WTC11 (cell line): ENCODE measurements at regions of chr16 and their contacts with region 1.

Region 1: DNA sequence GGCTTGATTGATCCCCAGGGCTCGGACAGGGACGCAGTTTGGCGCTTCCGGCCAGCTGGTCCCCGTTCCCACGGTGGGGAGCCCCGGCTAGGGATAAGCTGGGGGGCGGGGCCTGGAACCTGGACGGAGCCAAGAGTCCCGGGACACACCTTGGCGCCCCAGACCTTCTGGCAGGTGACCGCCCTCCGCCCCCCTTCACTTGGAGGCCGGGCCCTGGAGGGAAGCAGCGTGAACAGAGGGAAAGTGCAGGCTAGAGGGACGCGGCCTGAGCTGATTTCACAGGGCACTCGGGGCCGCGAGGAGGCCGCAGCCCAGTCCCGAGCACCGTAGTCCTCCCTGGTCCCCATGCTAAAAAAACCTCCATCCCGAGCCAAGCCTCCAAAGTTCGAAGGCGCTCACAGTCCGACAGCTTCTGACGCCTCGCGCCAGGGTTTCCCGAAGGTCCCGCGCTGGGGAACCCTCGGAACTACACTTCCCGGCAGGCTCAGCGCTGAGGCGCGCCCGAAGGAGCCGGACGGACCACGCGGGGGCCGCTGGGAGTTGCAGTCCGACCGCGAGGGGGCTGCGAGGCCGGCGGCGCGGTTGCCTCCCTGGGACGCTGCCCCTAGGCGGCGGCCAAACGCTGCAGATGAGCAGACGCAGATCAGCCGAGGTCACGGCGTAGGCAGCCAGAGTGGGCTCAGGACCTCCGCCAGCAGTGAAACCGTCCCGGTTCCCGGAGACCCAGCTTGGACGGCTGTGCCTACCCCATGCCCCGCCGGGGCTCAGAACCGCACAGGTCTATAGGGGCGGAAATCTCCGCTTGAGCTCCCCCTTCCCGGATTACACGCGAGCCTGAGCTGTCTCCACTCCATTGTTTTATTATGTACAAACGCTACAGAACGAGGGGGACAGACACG is at the start of gene TBX6:
- DNase-seq: peak; percentile 97
- ATAC-seq: peak; percentile 69
- H3K4me3 Mint-ChIP-seq: peak within 1 kb of the TSS; percentile 87
- H3K27ac Mint-ChIP-seq: peak within 1 kb of the TSS; percentile 98
- H3K4me1 Mint-ChIP-seq: peaks cover 27% of the 10 kb centered on the region
- H3K27me3 Mint-ChIP-seq: peaks cover 3% of the 10 kb centered on the region
- CTCF ChIP-seq: no peak
- total RNA-seq, gene TBX6: 5.1 to 7.6 TPM (median 6.6 TPM) in 3 replicates

Region 2: DNA sequence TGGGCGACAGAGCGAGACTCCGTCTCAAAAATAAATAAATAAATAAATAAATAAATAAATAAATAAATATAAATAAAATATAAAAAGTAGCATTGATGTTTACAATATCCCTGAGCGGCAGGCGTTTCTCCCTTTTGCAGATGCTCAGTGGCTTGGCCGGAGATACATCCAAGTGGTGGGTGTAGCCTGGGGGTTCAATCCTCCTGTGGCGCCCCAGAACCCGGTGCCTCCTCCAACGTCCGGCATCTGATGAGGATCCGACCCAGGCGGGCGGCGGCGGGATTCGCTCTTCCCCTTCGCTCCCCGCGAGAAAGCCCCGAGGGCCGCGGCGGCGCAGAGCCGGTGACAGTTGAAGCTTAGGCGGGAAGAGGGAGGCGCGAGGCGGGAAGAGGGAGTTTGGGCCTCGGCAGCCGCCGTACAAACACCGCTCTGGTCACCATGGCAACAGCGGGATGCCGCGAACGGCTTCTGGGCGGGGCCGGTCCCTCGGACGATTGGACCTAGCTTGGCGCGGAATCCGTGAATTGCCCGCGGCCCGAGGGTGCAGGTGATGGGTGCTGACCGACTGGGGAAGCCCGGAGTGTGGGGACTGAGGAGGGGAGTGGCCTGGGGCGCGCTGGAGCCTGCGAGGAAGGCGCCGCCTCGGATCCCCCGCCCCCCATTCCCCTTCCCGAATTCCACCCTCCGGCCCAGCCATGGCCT is 38.9 kb before region 1 on chr16:
- CTCF ChIA-PET with region 1: interaction called, 26 read pairs
- POLR2A ChIA-PET with region 1: no interaction called
- DNase-seq: peak; percentile 94
- ATAC-seq: peak; percentile 60
- H3K4me3 Mint-ChIP-seq: peak overlapping the region; percentile 82
- H3K27ac Mint-ChIP-seq: no peak overlapping the region
- H3K4me1 Mint-ChIP-seq: peaks cover 14% of the 10 kb centered on the region
- H3K27me3 Mint-ChIP-seq: peaks cover 37% of the 10 kb centered on the region
- CTCF ChIP-seq: no peak

Region 3: GRCh38 chr16:30075507-30076275 is 16.0 kb before region 1 on chr16 and contains the start of gene PPP4C:
- CTCF ChIA-PET with region 1: interaction called, 45 read pairs
- POLR2A ChIA-PET with region 1: interaction called, 7 read pairs
- DNase-seq: peak; percentile 90
- ATAC-seq: peak; percentile 84
- H3K4me3 Mint-ChIP-seq: peak within 1 kb of the TSS; percentile 89
- H3K27ac Mint-ChIP-seq: peak within 1 kb of the TSS; percentile 97
- H3K4me1 Mint-ChIP-seq: peaks cover 22% of the 10 kb centered on the region
- H3K27me3 Mint-ChIP-seq: no peaks in the 10 kb centered on the region
- CTCF ChIP-seq: no peak
- total RNA-seq, gene PPP4C: 159 to 164 TPM (median 161 TPM) in 3 replicates

Region 4: GRCh38 chr16:30149250-30149930 is 57.7 kb after region 1 on chr16:
- CTCF ChIA-PET with region 1: no interaction called
- POLR2A ChIA-PET with region 1: no interaction called
- DNase-seq: no peak
- ATAC-seq: no peak
- H3K4me3 Mint-ChIP-seq: no peak overlapping the region
- H3K27ac Mint-ChIP-seq: no peak overlapping the region
- H3K4me1 Mint-ChIP-seq: no peaks in the 10 kb centered on the region
- H3K27me3 Mint-ChIP-seq: peaks cover 35% of the 10 kb centered on the region
- CTCF ChIP-seq: no peak

Region 5: GRCh38 chr16:30183233-30184095 is 91.7 kb after region 1 on chr16 and contains the start of gene CORO1A:
- CTCF ChIA-PET with region 1: interaction called, 21 read pairs
- POLR2A ChIA-PET with region 1: interaction called, 3 read pairs
- DNase-seq: peak; percentile 86
- ATAC-seq: peak; percentile 78
- H3K4me3 Mint-ChIP-seq: peak within 1 kb of the TSS; percentile 74
- H3K27ac Mint-ChIP-seq: no peak within 1 kb of the TSS
- H3K4me1 Mint-ChIP-seq: peaks cover 7% of the 10 kb centered on the region
- H3K27me3 Mint-ChIP-seq: peaks cover 51% of the 10 kb centered on the region
- CTCF ChIP-seq: no peak
- total RNA-seq, gene CORO1A: 6.2 to 10.0 TPM (median 6.5 TPM) in 3 replicates

Region 6: GRCh38 chr16:30395155-30395991 is 303.6 kb after region 1 on chr16 and contains the start of gene ZNF48:
- CTCF ChIA-PET with region 1: interaction called, 13 read pairs
- POLR2A ChIA-PET with region 1: no interaction called
- DNase-seq: peak; percentile 85
- ATAC-seq: peak; percentile 81
- H3K4me3 Mint-ChIP-seq: peak within 1 kb of the TSS; percentile 97
- H3K27ac Mint-ChIP-seq: peak within 1 kb of the TSS; percentile 98
- H3K4me1 Mint-ChIP-seq: peaks cover 36% of the 10 kb centered on the region
- H3K27me3 Mint-ChIP-seq: peaks cover 4% of the 10 kb centered on the region; the same call in 1 of the 2 replicates
- CTCF ChIP-seq: no peak
- total RNA-seq, gene ZNF48: 31.3 to 39.3 TPM (median 32.1 TPM) in 3 replicates

Region 7: GRCh38 chr16:30417529-30418349 is 326.0 kb after region 1 on chr16:
- CTCF ChIA-PET with region 1: interaction called, 11 read pairs
- POLR2A ChIA-PET with region 1: no interaction called
- DNase-seq: peak; percentile 88
- ATAC-seq: peak; percentile 88
- H3K4me3 Mint-ChIP-seq: peak overlapping the region; percentile 54
- H3K27ac Mint-ChIP-seq: no peak overlapping the region
- H3K4me1 Mint-ChIP-seq: peaks cover 9% of the 10 kb centered on the region
- H3K27me3 Mint-ChIP-seq: no peaks in the 10 kb centered on the region
- CTCF ChIP-seq: no peak